ENCODE measurements at regions of chr2 and their contacts with region 1.

Region 1: DNA sequence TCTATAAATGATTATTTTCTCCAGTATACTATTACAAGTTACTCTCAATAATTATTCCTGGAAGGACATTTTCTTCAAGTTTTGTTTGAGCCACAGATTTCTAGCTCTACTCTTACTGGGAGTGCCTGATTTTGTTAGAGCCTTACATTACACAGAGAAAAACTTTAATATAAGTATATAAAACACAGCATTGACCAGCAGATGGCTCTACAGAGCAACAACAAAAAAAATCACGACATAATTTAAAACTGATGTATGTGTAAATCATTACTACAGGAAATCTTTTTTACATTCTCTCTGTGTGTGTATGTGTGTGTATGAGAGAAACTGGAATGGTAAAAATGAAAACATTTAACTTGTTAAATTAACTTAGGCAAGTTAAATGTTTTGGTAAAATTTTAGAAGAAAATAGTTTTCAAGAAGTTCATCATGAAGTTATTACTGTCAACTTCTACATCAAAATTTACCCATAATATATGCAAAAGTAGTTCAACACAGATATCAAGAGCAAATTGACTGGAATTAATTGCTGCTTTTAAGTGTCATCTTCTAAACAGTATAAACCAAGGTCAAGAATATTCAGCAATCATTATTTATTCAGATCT is 103.3 kb downstream of the MDH1 start:
- DNase-seq: peak in 2 of 4 experiments; percentile 24 to 32
- ATAC-seq: peak; percentile 53; the same call in 1 of the 3 replicates
- H3K4me3 ChIP-seq: no peak overlapping the region
- H3K27ac ChIP-seq: no peak overlapping the region
- H3K4me1 ChIP-seq: no peaks in the 10 kb centered on the region
- H3K27me3 ChIP-seq: peaks cover 0 to 5% of the 10 kb centered on the region in 2 experiments; a peak in 2 of 5 replicates
- CTCF ChIP-seq: peak in 2 of 3 experiments; percentile 42 to 65; a peak in 3 of 6 replicates
- EP300 ChIP-seq: no peak
- POLR2A ChIP-seq: no peak
- RAD21 ChIP-seq: peak; percentile 69 to 81

Region 2: DNA sequence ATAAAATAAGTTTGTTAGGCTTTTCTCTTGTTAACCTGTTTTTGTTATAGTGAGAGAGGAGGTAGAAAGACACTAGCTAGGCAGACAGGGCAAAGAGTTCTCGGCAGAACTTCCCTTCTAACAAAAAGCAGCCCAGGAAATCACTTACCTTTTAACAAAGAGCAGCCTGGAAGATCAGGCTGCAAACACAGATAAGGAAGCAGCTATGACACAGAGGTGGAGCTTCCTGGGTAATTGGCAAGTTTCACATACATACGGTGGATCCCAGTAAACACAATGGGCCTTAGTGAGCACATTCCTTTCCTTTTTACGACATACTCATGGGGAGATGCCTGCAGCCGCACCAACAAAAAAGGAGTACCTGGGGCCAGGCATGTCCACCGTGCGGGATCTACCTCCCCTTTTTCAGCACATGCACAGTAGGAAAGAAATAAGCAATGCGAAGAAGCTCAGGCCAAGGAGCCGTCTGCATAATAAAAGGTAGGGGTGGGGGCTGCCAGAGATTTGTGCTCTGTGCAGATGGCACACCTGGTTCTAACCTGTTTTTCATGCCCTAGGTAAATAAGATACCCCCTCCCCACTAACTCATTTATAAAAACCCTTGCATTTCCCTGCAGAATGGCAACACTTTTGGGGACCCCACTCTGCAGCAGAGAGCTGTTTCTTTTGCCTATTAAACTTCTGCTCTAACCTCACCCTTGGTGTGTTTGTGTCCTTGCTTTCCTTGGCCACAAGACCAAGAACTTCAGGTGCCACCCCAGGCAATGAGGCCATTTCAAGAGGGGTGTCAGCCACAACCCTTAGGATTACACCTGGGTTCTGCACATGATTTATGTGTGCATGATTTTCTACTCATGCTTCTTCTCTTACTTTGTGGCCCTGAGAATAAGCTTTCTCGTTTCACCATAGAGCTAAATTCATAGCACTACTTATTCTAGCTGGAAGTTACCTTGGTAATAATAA is 76.8 kb before region 1 on chr2:
- CTCF ChIA-PET with region 1: no interaction called
- POLR2A ChIA-PET with region 1: no interaction called
- in situ Hi-C with region 1: no loop called
- intact Hi-C with region 1: no loop called
- DNase-seq: peak in 2 of 4 experiments; percentile 47 to 65
- ATAC-seq: peak; percentile 93
- H3K4me3 ChIP-seq: no peak overlapping the region
- H3K27ac ChIP-seq: no peak overlapping the region
- H3K4me1 ChIP-seq: no peaks in the 10 kb centered on the region; a peak in 3 of 5 replicates
- H3K27me3 ChIP-seq: peaks cover 10 to 11% of the 10 kb centered on the region in 2 experiments; a peak in 3 of 5 replicates
- CTCF ChIP-seq: no peak
- EP300 ChIP-seq: no peak
- POLR2A ChIP-seq: no peak
- RAD21 ChIP-seq: no peak

Region 3: DNA sequence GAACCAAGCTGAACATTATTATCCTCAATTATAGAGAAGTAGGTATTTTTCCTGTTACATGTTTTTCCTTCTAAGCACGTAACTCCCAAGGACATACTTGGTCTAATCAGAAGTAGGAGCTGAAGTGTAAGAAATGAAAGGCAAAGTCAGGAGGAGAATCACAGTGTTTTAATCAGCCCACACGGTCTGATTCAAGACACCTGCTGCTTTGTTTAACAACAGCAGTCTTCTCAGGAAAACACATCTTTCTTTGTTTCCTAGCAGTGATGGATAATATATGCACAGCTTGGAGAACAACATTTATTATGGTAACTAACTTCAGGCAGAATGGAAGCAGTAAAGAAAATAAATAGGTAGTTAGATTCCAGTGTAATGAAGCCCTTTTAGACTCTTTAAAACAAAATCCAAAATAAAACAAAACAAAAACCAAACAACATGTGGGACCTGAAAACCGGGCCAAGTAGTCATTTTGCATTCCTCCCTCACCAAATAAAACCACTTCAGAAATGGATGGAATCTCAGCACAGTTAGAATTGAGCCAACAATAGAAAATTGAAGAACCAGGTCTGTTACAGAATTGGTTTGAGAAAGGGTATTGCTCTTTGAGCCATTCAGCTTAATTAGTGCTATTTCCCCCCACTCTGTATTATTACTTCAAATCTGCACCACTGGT is 88.5 kb after region 1 on chr2:
- CTCF ChIA-PET with region 1: no interaction called
- POLR2A ChIA-PET with region 1: no interaction called
- in situ Hi-C with region 1: no loop called
- intact Hi-C with region 1: no loop called
- DNase-seq: no peak
- ATAC-seq: no peak
- H3K4me3 ChIP-seq: no peak overlapping the region
- H3K27ac ChIP-seq: no peak overlapping the region
- H3K4me1 ChIP-seq: no peaks in the 10 kb centered on the region
- H3K27me3 ChIP-seq: peaks cover 0 to 2% of the 10 kb centered on the region in 2 experiments; a peak in 1 of 5 replicates
- CTCF ChIP-seq: no peak
- EP300 ChIP-seq: no peak
- POLR2A ChIP-seq: no peak
- RAD21 ChIP-seq: no peak

Region 4: DNA sequence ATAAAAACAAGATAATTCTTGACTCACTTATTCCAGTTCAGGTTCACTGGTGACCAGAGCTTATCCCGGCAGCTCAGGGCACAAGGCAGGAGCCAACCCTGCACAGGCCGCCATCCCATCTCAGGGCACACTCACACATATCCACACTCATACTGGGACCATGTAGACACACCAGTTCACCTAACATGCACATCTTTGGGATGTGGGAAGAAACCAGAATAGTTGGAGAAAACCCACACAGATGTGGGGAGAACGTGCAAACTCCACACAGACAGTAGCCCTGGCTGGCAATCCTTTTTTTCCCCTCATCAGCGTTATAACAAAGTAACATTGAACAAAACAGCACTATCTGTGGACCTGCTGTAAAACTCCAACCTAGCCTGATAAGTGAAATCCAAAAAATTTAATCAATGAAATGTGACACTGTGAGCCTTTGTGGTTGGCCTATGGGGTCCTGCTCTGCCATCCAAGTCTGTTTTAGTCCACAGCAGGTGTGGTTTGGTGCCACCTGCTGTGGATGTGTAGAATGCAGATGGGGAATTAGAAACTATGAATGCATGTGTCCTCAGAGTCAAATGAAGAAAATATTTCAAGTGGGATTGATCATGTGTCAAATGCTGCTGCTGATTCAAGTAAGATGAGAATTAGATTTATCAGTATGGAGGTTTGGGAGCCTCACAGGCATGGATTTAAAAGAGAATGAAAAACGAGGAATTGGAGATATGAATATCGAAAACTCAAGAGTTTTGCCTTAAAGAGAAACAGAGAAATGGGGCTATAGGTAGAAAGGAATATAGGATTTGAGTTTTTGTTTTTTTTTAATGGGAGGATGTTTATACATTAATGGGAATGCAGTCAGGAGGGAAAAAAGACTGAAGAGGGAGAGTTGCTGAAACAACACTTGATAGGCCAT is 196.6 kb after region 1 on chr2:
- CTCF ChIA-PET with region 1: interaction called, 20 read pairs
- POLR2A ChIA-PET with region 1: no interaction called
- in situ Hi-C with region 1: no loop called
- intact Hi-C with region 1: loop called (anchors 1 kb)
- DNase-seq: peak; percentile 30 to 67 (median 42)
- ATAC-seq: peak; percentile 92
- H3K4me3 ChIP-seq: no peak overlapping the region
- H3K27ac ChIP-seq: no peak overlapping the region
- H3K4me1 ChIP-seq: no peaks in the 10 kb centered on the region
- H3K27me3 ChIP-seq: no peaks in the 10 kb centered on the region
- CTCF ChIP-seq: peak; percentile 72 to 83 (median 75)
- EP300 ChIP-seq: no peak
- POLR2A ChIP-seq: 0 out of 2 replicates have a peak, but pooled peaks have one; percentile 21
- RAD21 ChIP-seq: peak; percentile 71 to 81

Measured in K562 (cell line).